ENCODE measurements at regions of chr15 and their contacts with region 1.

Region 1: GRCh38 chr15:26095710-26096330 is 232.7 kb upstream of the ATP10A start:
- DNase-seq: peak; percentile 73
- ATAC-seq: peak; percentile 97
- H3K4me3 Mint-ChIP-seq: no peak overlapping the region; the same call in 1 of the 2 replicates
- H3K27ac Mint-ChIP-seq: 0 out of 2 replicates have a peak overlapping the region, but pooled peaks have one; percentile 67
- H3K4me1 Mint-ChIP-seq: peaks cover 16% of the 10 kb centered on the region
- H3K27me3 Mint-ChIP-seq: no peaks in the 10 kb centered on the region; the same call in 1 of the 2 replicates
- CTCF ChIP-seq: peak; percentile 57; the same call in 1 of the 2 replicates

Region 2: GRCh38 chr15:25892126-25892525 is 203.7 kb before region 1 on chr15:
- CTCF ChIA-PET with region 1: no interaction called
- POLR2A ChIA-PET with region 1: no interaction called
- DNase-seq: no peak
- ATAC-seq: no peak
- H3K4me3 Mint-ChIP-seq: no peak overlapping the region
- H3K27ac Mint-ChIP-seq: no peak overlapping the region
- H3K4me1 Mint-ChIP-seq: peaks cover 4% of the 10 kb centered on the region
- H3K27me3 Mint-ChIP-seq: no peaks in the 10 kb centered on the region
- CTCF ChIP-seq: no peak

Region 3: GRCh38 chr15:25933456-25934158 is 162.2 kb before region 1 on chr15:
- CTCF ChIA-PET with region 1: interaction called, 14 read pairs
- POLR2A ChIA-PET with region 1: no interaction called
- DNase-seq: peak; percentile 73
- ATAC-seq: peak; percentile 95
- H3K4me3 Mint-ChIP-seq: peak overlapping the region; percentile 71
- H3K27ac Mint-ChIP-seq: no peak overlapping the region
- H3K4me1 Mint-ChIP-seq: peaks cover 12% of the 10 kb centered on the region
- H3K27me3 Mint-ChIP-seq: no peaks in the 10 kb centered on the region
- CTCF ChIP-seq: peak; percentile 36; the same call in 1 of the 2 replicates

Region 4: GRCh38 chr15:26023231-26023630 is 72.6 kb before region 1 on chr15:
- CTCF ChIA-PET with region 1: no interaction called
- POLR2A ChIA-PET with region 1: no interaction called
- DNase-seq: no peak
- ATAC-seq: no peak
- H3K4me3 Mint-ChIP-seq: no peak overlapping the region
- H3K27ac Mint-ChIP-seq: 0 out of 2 replicates have a peak overlapping the region, but pooled peaks have one; percentile 27
- H3K4me1 Mint-ChIP-seq: peaks cover 5% of the 10 kb centered on the region; the same call in 1 of the 2 replicates
- H3K27me3 Mint-ChIP-seq: no peaks in the 10 kb centered on the region
- CTCF ChIP-seq: no peak

Region 5: GRCh38 chr15:26070095-26070532 is 25.7 kb before region 1 on chr15:
- CTCF ChIA-PET with region 1: interaction called, 18 read pairs
- POLR2A ChIA-PET with region 1: no interaction called
- DNase-seq: no peak
- ATAC-seq: no peak
- H3K4me3 Mint-ChIP-seq: no peak overlapping the region
- H3K27ac Mint-ChIP-seq: no peak overlapping the region
- H3K4me1 Mint-ChIP-seq: peaks cover 11% of the 10 kb centered on the region
- H3K27me3 Mint-ChIP-seq: no peaks in the 10 kb centered on the region
- CTCF ChIP-seq: no peak

Region 6: GRCh38 chr15:26109203-26109602 is 13.4 kb after region 1 on chr15:
- CTCF ChIA-PET with region 1: interaction called, 10 read pairs
- POLR2A ChIA-PET with region 1: no interaction called
- DNase-seq: no peak
- ATAC-seq: no peak
- H3K4me3 Mint-ChIP-seq: no peak overlapping the region
- H3K27ac Mint-ChIP-seq: no peak overlapping the region
- H3K4me1 Mint-ChIP-seq: 0 out of 2 replicates have a peak, but pooled peaks cover 2% of the 10 kb centered on the region
- H3K27me3 Mint-ChIP-seq: no peaks in the 10 kb centered on the region
- CTCF ChIP-seq: no peak

Region 7: DNA sequence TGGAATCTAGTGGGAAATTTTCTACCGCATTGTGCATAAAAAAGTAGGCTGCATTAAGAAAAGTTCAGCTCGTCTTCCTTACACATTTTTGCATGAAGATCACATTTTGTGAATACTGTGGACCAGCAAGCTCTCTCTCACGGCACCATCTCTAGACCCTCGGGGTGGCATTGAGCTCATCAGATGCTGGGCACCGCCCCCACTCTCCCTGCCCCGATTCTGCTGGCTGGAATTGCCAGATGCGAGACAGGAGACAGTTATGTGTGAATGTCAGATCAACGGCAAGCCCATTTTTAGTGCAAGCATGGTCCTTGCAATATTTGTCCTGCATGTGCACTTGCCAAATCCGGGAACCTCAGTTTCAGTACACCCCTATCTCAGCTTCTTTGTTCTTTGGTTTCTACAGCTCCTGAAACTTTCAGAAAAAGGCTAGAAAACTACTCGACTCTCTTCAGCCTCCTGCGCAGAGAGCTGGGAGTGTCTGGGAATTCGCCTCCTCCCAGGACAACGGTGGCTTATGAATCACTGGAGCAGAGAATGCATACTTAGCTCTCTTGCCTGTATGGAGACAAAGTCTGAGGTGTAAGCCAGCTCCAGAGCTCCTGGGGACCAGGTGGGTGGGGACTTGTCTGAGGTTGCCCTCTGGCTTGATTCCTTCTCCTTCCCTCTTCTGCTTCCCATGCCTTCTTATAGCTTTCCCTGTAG is 52.5 kb after region 1 on chr15:
- CTCF ChIA-PET with region 1: interaction called, 11 read pairs
- POLR2A ChIA-PET with region 1: no interaction called
- DNase-seq: no peak
- ATAC-seq: no peak; the same call in 1 of the 2 replicates
- H3K4me3 Mint-ChIP-seq: no peak overlapping the region
- H3K27ac Mint-ChIP-seq: no peak overlapping the region
- H3K4me1 Mint-ChIP-seq: peaks cover 29% of the 10 kb centered on the region
- H3K27me3 Mint-ChIP-seq: no peaks in the 10 kb centered on the region
- CTCF ChIP-seq: no peak

Measured in WTC11 (cell line).